ENCODE measurements at regions of chr20 and their contacts with region 1.

Region 1: GRCh38 chr20:17995967-17996819 is 27.4 kb downstream of the MGME1 start:
- DNase-seq: no peak
- H3K4me3 ChIP-seq: no peak overlapping the region
- H3K27ac ChIP-seq: no peak overlapping the region
- H3K4me1 ChIP-seq: no peaks in the 10 kb centered on the region
- H3K27me3 ChIP-seq: no peaks in the 10 kb centered on the region
- CTCF ChIP-seq: peak; percentile 7 to 89 (median 62)
- EP300 ChIP-seq: no peak
- POLR2A ChIP-seq: no peak
- RAD21 ChIP-seq: peak; percentile 82 to 83

Region 2: DNA sequence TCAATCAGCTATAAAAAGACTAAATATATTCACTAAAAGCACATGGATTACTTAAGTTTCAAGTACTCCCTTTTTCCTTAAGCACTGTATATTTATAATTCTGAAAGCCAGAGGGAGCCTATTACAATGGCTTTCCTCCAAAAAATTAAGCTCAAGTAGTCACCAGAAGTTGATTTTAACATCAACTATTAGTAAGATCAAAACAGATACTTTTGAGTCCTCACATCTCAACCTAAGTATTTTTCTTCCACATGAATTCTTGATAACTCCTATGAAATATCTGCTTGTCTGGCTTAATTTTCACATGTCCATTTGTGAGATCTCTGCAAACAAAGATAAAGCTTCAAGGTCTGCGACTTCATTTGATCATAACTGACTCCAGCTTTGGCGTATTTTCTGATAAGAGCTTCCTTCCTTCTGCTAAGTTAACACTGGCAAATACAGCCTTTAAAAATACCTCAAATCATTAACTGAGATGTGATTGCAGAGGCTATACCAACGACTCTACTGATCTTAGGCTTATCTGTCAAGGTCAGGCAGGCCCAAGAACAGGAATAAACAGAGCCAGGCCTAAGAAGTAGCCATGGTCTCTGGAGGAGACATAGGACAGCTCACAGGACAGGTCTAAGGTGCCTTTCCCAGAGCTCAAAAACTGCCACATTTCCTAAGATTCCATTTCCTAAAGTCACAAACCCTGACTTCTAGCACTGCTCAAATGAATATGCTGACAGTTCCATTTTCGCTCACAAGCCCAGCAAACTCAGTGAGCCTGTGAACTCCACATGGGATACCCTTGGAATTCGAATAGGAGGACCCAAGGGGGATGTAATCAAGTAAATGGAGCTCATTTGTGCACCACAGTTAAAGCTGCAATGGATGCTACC is 37.6 kb before region 1 on chr20:
- CTCF ChIA-PET with region 1: interaction called, 15 read pairs
- POLR2A ChIA-PET with region 1: interaction called, 424 read pairs
- DNase-seq: no peak
- H3K4me3 ChIP-seq: no peak overlapping the region
- H3K27ac ChIP-seq: no peak overlapping the region
- H3K4me1 ChIP-seq: peaks cover 0 to 27% (median 6%) of the 10 kb centered on the region in 4 experiments; a peak in 5 of 7 replicates
- H3K27me3 ChIP-seq: no peaks in the 10 kb centered on the region
- CTCF ChIP-seq: no peak
- EP300 ChIP-seq: no peak
- POLR2A ChIP-seq: 0 out of 3 replicates have a peak, but pooled peaks of 1 of the 2 experiments have one; percentile 69
- RAD21 ChIP-seq: no peak

Region 3: GRCh38 chr20:17968366-17969279 is 27.6 kb before region 1 on chr20 and contains the starts of genes MGME1 and SNX5:
- CTCF ChIA-PET with region 1: interaction called, 8 read pairs
- POLR2A ChIA-PET with region 1: interaction called, 424 read pairs
- DNase-seq: peak; percentile 98 to 99
- H3K4me3 ChIP-seq: peak within 1 kb of the TSS; percentile 77 to 99 (median 91)
- H3K27ac ChIP-seq: peak within 1 kb of the TSS; percentile 100
- H3K4me1 ChIP-seq: peaks cover 5 to 14% (median 10%) of the 10 kb centered on the region in 4 experiments; a peak in 6 of 7 replicates
- H3K27me3 ChIP-seq: no peaks in the 10 kb centered on the region
- CTCF ChIP-seq: no peak
- EP300 ChIP-seq: no peak
- POLR2A ChIP-seq: peak; percentile 97 to 98
- RAD21 ChIP-seq: no peak
- total RNA-seq, gene MGME1: 56.3 and 59.0 TPM in 2 replicates
- total RNA-seq, gene SNX5: 181 and 194 TPM in 2 replicates

Region 4: GRCh38 chr20:17985388-17986018 is 10.7 kb before region 1 on chr20:
- CTCF ChIA-PET with region 1: interaction called, 15 read pairs
- POLR2A ChIA-PET with region 1: interaction called, 9 read pairs
- DNase-seq: no peak
- H3K4me3 ChIP-seq: no peak overlapping the region
- H3K27ac ChIP-seq: no peak overlapping the region
- H3K4me1 ChIP-seq: peaks cover 0 to 5% (median 3%) of the 10 kb centered on the region in 4 experiments; a peak in 5 of 7 replicates
- H3K27me3 ChIP-seq: no peaks in the 10 kb centered on the region
- CTCF ChIP-seq: no peak
- EP300 ChIP-seq: no peak
- POLR2A ChIP-seq: no peak
- RAD21 ChIP-seq: no peak

Region 5: GRCh38 chr20:18019070-18019469 is 22.9 kb after region 1 on chr20:
- CTCF ChIA-PET with region 1: interaction called, 27 read pairs
- POLR2A ChIA-PET with region 1: no interaction called
- DNase-seq: no peak
- H3K4me3 ChIP-seq: no peak overlapping the region
- H3K27ac ChIP-seq: no peak overlapping the region
- H3K4me1 ChIP-seq: no peaks in the 10 kb centered on the region
- H3K27me3 ChIP-seq: no peaks in the 10 kb centered on the region
- CTCF ChIP-seq: peak; percentile 69 to 94 (median 78)
- EP300 ChIP-seq: no peak
- POLR2A ChIP-seq: no peak
- RAD21 ChIP-seq: peak; percentile 67 to 82

Region 6: DNA sequence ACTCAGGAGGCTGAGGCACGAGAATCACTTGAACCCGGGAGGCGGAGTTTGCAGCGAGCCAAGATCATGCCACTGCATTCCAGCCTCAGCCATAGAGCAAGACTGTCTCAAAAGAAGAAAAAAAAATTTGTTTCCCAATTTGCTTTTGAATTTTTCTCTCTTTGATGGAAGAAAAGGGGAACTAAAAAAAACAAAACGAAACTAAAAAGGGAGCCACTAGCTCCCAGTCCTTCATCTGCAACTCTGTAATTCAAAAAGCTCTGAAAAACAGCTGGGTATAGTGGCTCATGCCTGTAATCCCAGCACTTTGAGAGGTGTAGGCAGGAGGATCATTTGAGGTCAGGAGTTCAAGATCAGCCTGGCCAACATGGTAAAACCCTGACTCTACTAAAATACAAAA is 52.0 kb after region 1 on chr20:
- CTCF ChIA-PET with region 1: no interaction called
- POLR2A ChIA-PET with region 1: no interaction called
- DNase-seq: no peak
- H3K4me3 ChIP-seq: no peak overlapping the region
- H3K27ac ChIP-seq: no peak overlapping the region
- H3K4me1 ChIP-seq: no peaks in the 10 kb centered on the region
- H3K27me3 ChIP-seq: no peaks in the 10 kb centered on the region
- CTCF ChIP-seq: no peak
- EP300 ChIP-seq: no peak
- POLR2A ChIP-seq: no peak
- RAD21 ChIP-seq: no peak